ENCODE measurements at regions of chr1 and their contacts with region 1.

Region 1: DNA sequence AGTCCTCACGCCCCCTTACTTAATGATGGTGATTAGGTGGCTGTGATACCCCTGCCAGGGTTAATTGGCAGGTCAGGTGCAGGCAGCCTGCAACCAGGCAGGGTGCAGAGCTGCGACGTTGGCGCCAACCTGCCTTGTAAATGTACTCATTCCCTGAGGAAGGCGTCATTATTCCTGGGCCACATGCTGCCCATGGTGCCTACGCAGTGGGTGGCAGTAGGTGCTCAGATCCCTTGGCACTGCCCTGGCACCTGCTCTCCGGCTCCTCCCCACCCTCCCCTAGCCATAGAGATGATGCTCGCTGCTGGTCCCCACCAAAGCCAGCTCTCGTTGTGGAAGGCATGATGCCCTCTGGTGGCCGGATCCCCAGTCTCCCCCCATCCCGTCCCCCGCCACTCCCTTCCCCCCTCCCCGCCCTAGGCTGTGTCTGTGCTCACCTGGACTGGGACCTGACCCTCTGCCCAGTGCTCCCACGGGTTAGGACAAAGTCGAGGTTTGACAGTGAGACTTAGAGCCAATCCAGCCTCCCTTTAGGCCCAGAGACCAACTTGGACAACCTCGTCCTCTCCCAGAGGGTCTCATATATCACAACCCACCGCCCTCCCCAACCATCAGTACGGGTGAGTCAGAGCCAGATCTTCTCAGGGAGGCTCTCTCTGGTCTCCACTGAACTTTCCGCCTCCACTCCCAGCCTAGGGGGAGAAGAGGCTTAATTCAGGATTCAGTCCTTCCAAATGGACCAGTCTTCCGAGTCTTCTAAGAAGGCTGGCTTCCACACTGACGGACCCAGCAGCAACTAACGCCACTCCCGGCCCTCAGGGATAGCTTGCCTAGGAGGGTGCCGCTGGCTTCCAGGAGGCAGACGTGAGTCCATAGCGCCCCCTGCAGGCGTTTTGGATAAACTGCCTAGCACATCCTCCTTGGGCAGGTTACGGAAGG is 5.7 kb downstream of the KRTCAP2 start:
- DNase-seq: peak; percentile 95
- ATAC-seq: peak; percentile 75
- H3K4me3 Mint-ChIP-seq: peak overlapping the region; percentile 89
- H3K27ac Mint-ChIP-seq: peak overlapping the region; percentile 90
- H3K4me1 Mint-ChIP-seq: peaks cover 24% of the 10 kb centered on the region
- H3K27me3 Mint-ChIP-seq: no peaks in the 10 kb centered on the region; the same call in 1 of the 2 replicates
- CTCF ChIP-seq: peak; percentile 94

Region 2: DNA sequence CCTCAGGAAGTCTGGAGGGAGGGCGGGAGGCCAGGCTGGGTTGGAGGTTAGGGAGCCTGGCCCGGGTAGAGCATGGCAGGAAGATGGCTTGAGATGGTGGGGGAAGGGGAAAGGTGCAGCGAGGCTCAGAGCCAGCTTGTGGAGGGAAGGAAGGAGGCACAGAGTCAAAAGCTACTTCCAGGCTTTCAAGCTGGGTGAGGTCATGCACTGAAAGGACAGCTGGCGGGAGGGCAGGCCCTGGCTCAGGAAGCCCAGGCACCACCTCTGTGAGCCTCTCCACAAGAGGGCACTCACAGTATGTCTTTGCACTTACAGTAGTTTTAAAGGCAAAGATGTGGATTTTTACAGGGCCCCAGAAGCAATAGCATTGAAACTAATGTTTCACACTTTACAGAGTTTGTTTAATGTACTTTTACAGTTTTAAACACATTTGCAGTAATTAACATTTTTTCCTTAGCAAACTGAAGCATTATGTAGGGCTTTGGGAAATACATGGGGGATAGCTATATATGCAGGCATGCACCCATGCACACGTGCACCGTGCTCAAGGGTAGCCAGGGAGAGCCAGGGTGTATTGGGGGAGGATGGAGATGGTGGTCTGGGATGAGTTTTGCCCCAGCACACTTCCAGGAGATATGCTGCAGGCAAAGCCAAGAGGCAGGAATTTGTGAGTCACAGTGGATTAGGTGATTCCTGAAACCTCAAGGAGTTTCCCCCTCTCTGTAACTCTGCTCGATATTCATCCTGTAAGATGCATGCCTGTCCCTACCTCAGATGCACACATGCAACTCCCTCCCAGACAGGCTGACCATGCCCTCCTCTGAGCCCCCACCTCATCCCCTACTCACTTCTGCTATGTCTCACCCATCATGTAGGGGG is 122.4 kb before region 1 on chr1:
- CTCF ChIA-PET with region 1: interaction called, 29 read pairs
- POLR2A ChIA-PET with region 1: no interaction called
- DNase-seq: peak; percentile 77
- ATAC-seq: peak; percentile 92
- H3K4me3 Mint-ChIP-seq: no peak overlapping the region
- H3K27ac Mint-ChIP-seq: no peak overlapping the region
- H3K4me1 Mint-ChIP-seq: peaks cover 35% of the 10 kb centered on the region
- H3K27me3 Mint-ChIP-seq: no peaks in the 10 kb centered on the region; the same call in none of the 2 replicates
- CTCF ChIP-seq: no peak; the same call in 1 of the 2 replicates

Region 3: GRCh38 chr1:155078469-155079209 is 88.8 kb before region 1 on chr1 and contains the start of gene EFNA3:
- CTCF ChIA-PET with region 1: interaction called, 25 read pairs
- POLR2A ChIA-PET with region 1: no interaction called
- DNase-seq: peak; percentile 84
- ATAC-seq: peak; percentile 38
- H3K4me3 Mint-ChIP-seq: peak within 1 kb of the TSS; percentile 76
- H3K27ac Mint-ChIP-seq: no peak within 1 kb of the TSS
- H3K4me1 Mint-ChIP-seq: peaks cover 25% of the 10 kb centered on the region
- H3K27me3 Mint-ChIP-seq: peaks cover 84% of the 10 kb centered on the region
- CTCF ChIP-seq: no peak
- total RNA-seq, gene EFNA3: 12.5 to 15.4 TPM (median 15.4 TPM) in 3 replicates

Region 4: GRCh38 chr1:155117617-155118016 is 49.8 kb before region 1 on chr1:
- CTCF ChIA-PET with region 1: interaction called, 40 read pairs
- POLR2A ChIA-PET with region 1: no interaction called
- DNase-seq: no peak
- ATAC-seq: no peak
- H3K4me3 Mint-ChIP-seq: no peak overlapping the region
- H3K27ac Mint-ChIP-seq: no peak overlapping the region
- H3K4me1 Mint-ChIP-seq: no peaks in the 10 kb centered on the region
- H3K27me3 Mint-ChIP-seq: peaks cover 36% of the 10 kb centered on the region
- CTCF ChIP-seq: no peak

Region 5: DNA sequence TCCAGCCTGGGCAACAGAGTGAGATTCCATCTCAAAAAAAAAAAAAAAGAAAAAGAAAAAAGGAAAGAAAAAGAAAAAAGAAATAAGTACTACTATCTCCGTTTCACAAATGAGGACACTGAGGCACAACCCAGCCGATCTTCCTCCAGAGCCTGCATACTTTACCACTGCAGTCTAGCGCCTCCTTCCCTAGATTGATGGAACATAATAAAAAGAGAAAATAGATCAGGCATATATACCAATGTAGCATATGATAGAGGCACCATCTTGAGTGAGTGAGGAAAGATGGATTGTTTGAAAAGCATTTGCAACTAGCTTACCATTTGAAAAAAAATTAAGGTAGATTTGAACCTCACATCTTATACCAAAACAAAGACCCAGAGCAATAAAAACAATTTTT is 21.9 kb before region 1 on chr1:
- CTCF ChIA-PET with region 1: interaction called, 43 read pairs
- POLR2A ChIA-PET with region 1: no interaction called
- DNase-seq: no peak
- ATAC-seq: no peak
- H3K4me3 Mint-ChIP-seq: no peak overlapping the region
- H3K27ac Mint-ChIP-seq: no peak overlapping the region
- H3K4me1 Mint-ChIP-seq: peaks cover 6% of the 10 kb centered on the region; the same call in 1 of the 2 replicates
- H3K27me3 Mint-ChIP-seq: peaks cover 36% of the 10 kb centered on the region
- CTCF ChIP-seq: no peak

Region 6: GRCh38 chr1:155236441-155236840 is 69.0 kb after region 1 on chr1:
- CTCF ChIA-PET with region 1: no interaction called
- POLR2A ChIA-PET with region 1: no interaction called
- DNase-seq: no peak
- ATAC-seq: no peak
- H3K4me3 Mint-ChIP-seq: no peak overlapping the region
- H3K27ac Mint-ChIP-seq: no peak overlapping the region
- H3K4me1 Mint-ChIP-seq: peaks cover 10% of the 10 kb centered on the region
- H3K27me3 Mint-ChIP-seq: peaks cover 4% of the 10 kb centered on the region; the same call in 1 of the 2 replicates
- CTCF ChIP-seq: no peak

Region 7: GRCh38 chr1:155268634-155269033 is 101.2 kb after region 1 on chr1:
- CTCF ChIA-PET with region 1: no interaction called
- POLR2A ChIA-PET with region 1: no interaction called
- DNase-seq: no peak
- ATAC-seq: no peak
- H3K4me3 Mint-ChIP-seq: no peak overlapping the region
- H3K27ac Mint-ChIP-seq: no peak overlapping the region
- H3K4me1 Mint-ChIP-seq: peaks cover 15% of the 10 kb centered on the region
- H3K27me3 Mint-ChIP-seq: no peaks in the 10 kb centered on the region
- CTCF ChIP-seq: no peak